ENCODE measurements at regions of chr16 and their contacts with region 1.

Region 1: GRCh38 chr16:85610508-85611332 is 2.4 kb upstream of the GSE1 start:
- DNase-seq: peak; percentile 90 to 93
- ATAC-seq: peak; percentile 74 to 89 (median 75)
- H3K4me3 ChIP-seq: peak overlapping the region; percentile 4
- H3K4me3 Mint-ChIP-seq: peak overlapping the region; percentile 71
- H3K27ac ChIP-seq: no peak overlapping the region
- H3K27ac Mint-ChIP-seq: peak overlapping the region; percentile 69 to 75
- H3K4me1 ChIP-seq: peaks cover 86% of the 10 kb centered on the region
- H3K4me1 Mint-ChIP-seq: peaks cover 32 to 70% of the 10 kb centered on the region in 2 donors
- H3K27me3 ChIP-seq: no peaks in the 10 kb centered on the region
- H3K27me3 Mint-ChIP-seq: no peaks in the 10 kb centered on the region
- CTCF ChIP-seq: peak; percentile 99

Region 2: DNA sequence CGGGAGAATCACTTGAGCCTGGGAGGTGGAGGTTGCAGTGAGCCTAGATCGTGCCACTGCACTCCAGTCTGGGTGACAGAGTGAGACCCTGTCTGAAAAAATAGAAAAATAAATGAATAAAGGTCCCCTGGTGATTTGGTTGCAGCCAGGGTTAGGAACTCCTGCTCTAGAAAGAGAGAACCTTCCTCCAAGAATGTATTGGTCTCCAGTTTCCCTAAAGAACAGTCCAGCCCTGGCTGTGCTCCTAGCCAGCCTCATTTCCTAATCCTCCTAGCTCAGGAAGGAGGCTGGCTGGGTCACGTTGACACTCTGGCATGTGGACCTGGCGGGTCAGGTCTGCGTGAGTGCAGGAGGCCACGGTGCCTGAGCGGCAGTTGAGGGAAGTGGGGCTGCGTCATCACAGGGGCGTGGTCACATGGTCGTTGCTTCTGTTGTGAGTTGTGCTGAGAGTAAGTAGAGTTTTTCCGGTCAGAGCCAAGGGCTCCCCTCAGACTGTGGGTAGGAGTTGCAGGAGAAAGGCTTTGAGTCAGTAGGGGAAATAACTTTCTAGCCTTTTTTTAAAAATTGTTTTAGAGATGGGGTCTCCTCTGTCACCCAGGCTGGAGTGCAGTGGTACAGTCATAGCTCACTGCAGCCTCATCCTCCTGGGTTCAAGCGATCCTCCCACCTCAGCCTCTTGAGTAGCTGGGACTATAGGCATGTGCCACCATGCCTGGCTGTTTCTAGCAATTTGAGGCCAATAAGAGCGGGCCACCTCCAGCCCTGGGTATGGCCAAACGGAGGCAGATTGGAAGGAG is 304.5 kb before region 1 on chr16:
- intact Hi-C with region 1: loop called (anchors 10 kb)
- DNase-seq: peak; percentile 60 to 89
- ATAC-seq: peak; percentile 76 to 79 (median 77)
- H3K4me3 ChIP-seq: no peak overlapping the region
- H3K4me3 Mint-ChIP-seq: no peak overlapping the region
- H3K27ac ChIP-seq: no peak overlapping the region
- H3K27ac Mint-ChIP-seq: peak overlapping the region in 1 of 2 donors; percentile 46
- H3K4me1 ChIP-seq: peaks cover 67% of the 10 kb centered on the region
- H3K4me1 Mint-ChIP-seq: peaks cover 24 to 45% of the 10 kb centered on the region in 2 donors
- H3K27me3 ChIP-seq: peaks cover 11% of the 10 kb centered on the region
- H3K27me3 Mint-ChIP-seq: peaks cover 9 to 10% of the 10 kb centered on the region in 2 donors
- CTCF ChIP-seq: no peak

Region 3: GRCh38 chr16:85420501-85421337 is 190.0 kb before region 1 on chr16:
- intact Hi-C with region 1: loop called (anchors 1 kb)
- DNase-seq: peak; percentile 83 to 87
- ATAC-seq: peak; percentile 92 to 95 (median 93)
- H3K4me3 ChIP-seq: no peak overlapping the region
- H3K4me3 Mint-ChIP-seq: no peak overlapping the region
- H3K27ac ChIP-seq: no peak overlapping the region
- H3K27ac Mint-ChIP-seq: peak overlapping the region in 1 of 2 donors; percentile 65
- H3K4me1 ChIP-seq: peaks cover 12% of the 10 kb centered on the region
- H3K4me1 Mint-ChIP-seq: peaks cover 5% of the 10 kb centered on the region in 2 donors
- H3K27me3 ChIP-seq: no peaks in the 10 kb centered on the region
- H3K27me3 Mint-ChIP-seq: peaks cover 0 to 14% of the 10 kb centered on the region in 2 donors
- CTCF ChIP-seq: peak; percentile 100

Region 4: GRCh38 chr16:85479972-85480751 is 130.6 kb before region 1 on chr16:
- intact Hi-C with region 1: loop called (anchors 2 kb)
- DNase-seq: peak in 1 of 2 donors; percentile 42
- ATAC-seq: peak in 1 of 3 donors; percentile 44
- H3K4me3 ChIP-seq: no peak overlapping the region
- H3K4me3 Mint-ChIP-seq: no peak overlapping the region
- H3K27ac ChIP-seq: no peak overlapping the region
- H3K27ac Mint-ChIP-seq: no peak overlapping the region
- H3K4me1 ChIP-seq: no peaks in the 10 kb centered on the region
- H3K4me1 Mint-ChIP-seq: peaks cover 0 to 5% of the 10 kb centered on the region in 2 donors
- H3K27me3 ChIP-seq: no peaks in the 10 kb centered on the region
- H3K27me3 Mint-ChIP-seq: peaks cover 0 to 3% of the 10 kb centered on the region in 2 donors
- CTCF ChIP-seq: peak; percentile 18

Region 5: DNA sequence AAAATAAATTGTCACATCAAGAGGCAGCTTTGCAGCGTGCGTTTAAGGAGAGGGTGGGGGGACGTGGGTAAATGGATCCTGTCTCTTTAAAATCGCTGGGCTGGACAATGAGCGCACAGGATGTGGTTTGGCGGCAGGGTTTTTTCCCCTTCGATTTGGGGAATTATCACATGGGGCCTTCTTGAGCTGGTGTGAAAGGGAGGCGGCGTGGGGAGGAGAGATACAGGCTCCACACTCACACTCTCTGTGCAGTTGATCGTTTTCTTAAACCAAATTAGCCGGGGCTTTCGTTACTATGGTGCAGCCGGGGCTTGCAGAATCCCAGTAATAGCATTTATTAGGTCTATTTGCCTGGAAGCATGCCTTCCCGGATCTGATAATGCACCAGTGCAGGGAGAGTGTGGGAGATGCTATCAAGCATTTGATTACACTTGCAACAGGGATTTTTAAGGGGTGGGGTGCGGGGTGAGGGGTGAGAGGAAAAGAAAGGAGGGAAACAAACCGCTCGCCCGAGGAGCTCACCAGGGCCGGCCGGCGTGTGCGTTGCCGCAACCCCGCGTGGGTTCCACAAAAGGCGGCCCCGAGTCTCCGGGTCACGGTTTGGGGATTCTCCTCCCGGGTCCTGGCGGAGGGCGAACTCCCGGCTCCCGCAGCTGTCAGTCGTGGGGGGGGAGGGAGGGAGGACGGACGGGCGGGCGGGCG is 56.5 kb before region 1 on chr16:
- intact Hi-C with region 1: loop called (anchors 1 kb)
- DNase-seq: peak; percentile 85 to 92
- ATAC-seq: peak; percentile 45 to 79 (median 68)
- H3K4me3 ChIP-seq: peak overlapping the region; percentile 100
- H3K4me3 Mint-ChIP-seq: peak overlapping the region; percentile 96
- H3K27ac ChIP-seq: peak overlapping the region; percentile 98
- H3K27ac Mint-ChIP-seq: peak overlapping the region; percentile 92 to 99
- H3K4me1 ChIP-seq: peaks cover 46% of the 10 kb centered on the region
- H3K4me1 Mint-ChIP-seq: peaks cover 40 to 56% of the 10 kb centered on the region in 2 donors
- H3K27me3 ChIP-seq: no peaks in the 10 kb centered on the region
- H3K27me3 Mint-ChIP-seq: no peaks in the 10 kb centered on the region
- CTCF ChIP-seq: no peak

Region 6: GRCh38 chr16:85569615-85570212 is 41.0 kb before region 1 on chr16:
- intact Hi-C with region 1: loop called (anchors 1 kb)
- DNase-seq: peak; percentile 62 to 69
- ATAC-seq: peak; percentile 51 to 66 (median 57)
- H3K4me3 ChIP-seq: peak overlapping the region; percentile 35
- H3K4me3 Mint-ChIP-seq: peak overlapping the region; percentile 95
- H3K27ac ChIP-seq: peak overlapping the region; percentile 86
- H3K27ac Mint-ChIP-seq: peak overlapping the region; percentile 96 to 99
- H3K4me1 ChIP-seq: peaks cover 98% of the 10 kb centered on the region
- H3K4me1 Mint-ChIP-seq: peaks cover 89 to 98% of the 10 kb centered on the region in 2 donors
- H3K27me3 ChIP-seq: no peaks in the 10 kb centered on the region
- H3K27me3 Mint-ChIP-seq: peaks cover 0 to 3% of the 10 kb centered on the region in 2 donors
- CTCF ChIP-seq: no peak

Region 7: GRCh38 chr16:85639536-85640253 is 29.0 kb after region 1 on chr16:
- intact Hi-C with region 1: no loop called
- DNase-seq: no peak
- ATAC-seq: no peak
- H3K4me3 ChIP-seq: no peak overlapping the region
- H3K4me3 Mint-ChIP-seq: no peak overlapping the region
- H3K27ac ChIP-seq: no peak overlapping the region
- H3K27ac Mint-ChIP-seq: peak overlapping the region in 1 of 2 donors; percentile 73
- H3K4me1 ChIP-seq: peaks cover 54% of the 10 kb centered on the region
- H3K4me1 Mint-ChIP-seq: peaks cover 27 to 55% of the 10 kb centered on the region in 2 donors
- H3K27me3 ChIP-seq: no peaks in the 10 kb centered on the region
- H3K27me3 Mint-ChIP-seq: no peaks in the 10 kb centered on the region
- CTCF ChIP-seq: no peak